Activated CD4-positive, alpha-beta T cell treated with anti-CD3 and anti-CD28 coated beads for 36 hours (primary cell): ENCODE measurements at regions of chr17 and their contacts with region 1.

Region 1: DNA sequence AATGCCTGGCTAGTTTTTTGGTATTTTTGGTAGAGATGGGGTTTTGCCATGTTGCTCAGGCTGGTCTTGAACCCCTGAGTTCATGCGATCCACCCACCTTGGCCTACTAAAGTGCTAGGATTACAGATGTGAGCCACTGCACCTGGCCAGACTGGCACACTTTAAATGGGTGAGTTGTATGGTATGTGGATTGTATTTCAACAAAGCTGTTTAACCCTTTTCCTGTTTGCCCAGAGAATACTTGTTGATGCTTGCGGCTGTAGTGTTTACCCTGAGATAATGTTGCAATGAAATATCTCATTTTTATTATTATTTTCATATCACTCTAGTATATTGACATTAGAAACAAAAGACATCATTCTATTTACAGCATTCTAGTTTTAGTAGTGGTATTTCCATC is 17.1 kb upstream of the TMEM94 start:
- DNase-seq: no peak
- ATAC-seq: no peak
- H3K4me3 Mint-ChIP-seq: no peak overlapping the region
- H3K27ac Mint-ChIP-seq: no peak overlapping the region
- H3K4me1 Mint-ChIP-seq: peaks cover 11% of the 10 kb centered on the region
- H3K27me3 Mint-ChIP-seq: no peaks in the 10 kb centered on the region

Region 2: DNA sequence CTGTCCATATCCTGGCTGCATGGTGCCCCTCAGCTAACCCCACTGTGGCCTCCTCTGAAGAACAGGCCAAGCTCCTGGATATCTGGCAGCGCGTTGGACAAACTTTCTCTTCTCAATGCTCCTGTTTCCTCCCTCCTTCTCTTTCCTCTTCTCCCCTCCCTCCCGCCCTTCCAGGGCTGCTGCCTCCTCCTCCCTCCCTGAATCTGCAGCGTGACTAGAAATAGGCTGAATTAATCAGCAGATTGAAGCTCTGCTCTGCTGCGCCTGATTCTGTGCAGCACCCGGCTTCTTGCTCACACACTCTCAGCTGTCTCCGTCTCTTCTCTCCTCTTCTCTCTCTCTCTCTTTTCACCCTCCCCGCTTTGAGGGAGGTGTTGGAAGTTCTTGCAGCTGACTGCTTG is 37.0 kb after region 1 on chr17:
- CTCF ChIA-PET with region 1: no interaction called
- POLR2A ChIA-PET with region 1: no interaction called
- intact Hi-C with region 1: loop called in 1 of 2 experiments (anchors 5 kb)
- DNase-seq: no peak
- ATAC-seq: no peak
- H3K4me3 Mint-ChIP-seq: no peak overlapping the region
- H3K27ac Mint-ChIP-seq: no peak overlapping the region
- H3K4me1 Mint-ChIP-seq: no peaks in the 10 kb centered on the region
- H3K27me3 Mint-ChIP-seq: no peaks in the 10 kb centered on the region